Left cardiac atrium (tissue), 4 donors: ENCODE measurements at regions of chr4 and their contacts with region 1.

Region 1: GRCh38 chr4:64430933-64431332 is 21.7 kb upstream of the TECRL start:
- DNase-seq: no peak
- ATAC-seq: no peak

Region 2: GRCh38 chr4:64384237-64385203 is 46.4 kb before region 1 on chr4:
- intact Hi-C with region 1: no loop called
- DNase-seq: no peak
- ATAC-seq: peak in 1 of 2 donors; percentile 56

Region 3: DNA sequence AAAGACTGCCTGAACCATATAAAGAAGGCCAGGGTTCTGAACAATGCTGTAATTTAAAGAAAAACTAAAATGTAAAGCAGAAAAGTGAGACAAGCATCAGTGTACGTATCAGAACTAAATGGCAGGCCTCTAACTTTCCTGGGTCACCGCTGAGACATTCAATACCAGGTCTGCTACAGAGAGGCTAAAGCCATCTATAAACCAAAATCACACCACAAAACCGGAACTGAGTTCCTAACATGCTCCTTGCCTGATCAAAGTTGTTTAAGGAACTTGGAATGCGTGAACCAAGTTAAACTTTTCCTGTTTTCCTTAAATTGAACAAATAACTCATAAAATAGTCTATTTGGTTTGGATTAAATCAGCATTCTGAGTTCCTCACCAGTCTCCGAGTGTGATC is 33.6 kb after region 1 on chr4:
- intact Hi-C with region 1: loop called in 1 of 2 experiments (anchors 5 kb)
- DNase-seq: no peak
- ATAC-seq: no peak